Activated naive CD4-positive, alpha-beta T cell treated with anti-CD3 and anti-CD28 coated beads, Interleukin-2, amount 10 ng/mL, durations not matched to agents 7 days and 5 days (primary cell): ENCODE measurements at regions of chr6 and their contacts with region 1.

Region 1: GRCh38 chr6:27743818-27744217 is 168.4 kb downstream of the OR2B2 start:
- DNase-seq: no peak
- H3K4me3 Mint-ChIP-seq: no peak overlapping the region
- H3K27ac Mint-ChIP-seq: no peak overlapping the region
- H3K4me1 Mint-ChIP-seq: peaks cover 11% of the 10 kb centered on the region
- H3K27me3 Mint-ChIP-seq: peaks cover 36% of the 10 kb centered on the region

Region 2: GRCh38 chr6:27753668-27754407 is 10.0 kb after region 1 on chr6:
- CTCF ChIA-PET with region 1: interaction called, 15 read pairs
- DNase-seq: peak; percentile 81
- H3K4me3 Mint-ChIP-seq: peak overlapping the region; percentile 96
- H3K27ac Mint-ChIP-seq: peak overlapping the region; percentile 88
- H3K4me1 Mint-ChIP-seq: peaks cover 46% of the 10 kb centered on the region
- H3K27me3 Mint-ChIP-seq: peaks cover 12% of the 10 kb centered on the region